ENCODE measurements at regions of chr6 and their contacts with region 1.

Region 1: DNA sequence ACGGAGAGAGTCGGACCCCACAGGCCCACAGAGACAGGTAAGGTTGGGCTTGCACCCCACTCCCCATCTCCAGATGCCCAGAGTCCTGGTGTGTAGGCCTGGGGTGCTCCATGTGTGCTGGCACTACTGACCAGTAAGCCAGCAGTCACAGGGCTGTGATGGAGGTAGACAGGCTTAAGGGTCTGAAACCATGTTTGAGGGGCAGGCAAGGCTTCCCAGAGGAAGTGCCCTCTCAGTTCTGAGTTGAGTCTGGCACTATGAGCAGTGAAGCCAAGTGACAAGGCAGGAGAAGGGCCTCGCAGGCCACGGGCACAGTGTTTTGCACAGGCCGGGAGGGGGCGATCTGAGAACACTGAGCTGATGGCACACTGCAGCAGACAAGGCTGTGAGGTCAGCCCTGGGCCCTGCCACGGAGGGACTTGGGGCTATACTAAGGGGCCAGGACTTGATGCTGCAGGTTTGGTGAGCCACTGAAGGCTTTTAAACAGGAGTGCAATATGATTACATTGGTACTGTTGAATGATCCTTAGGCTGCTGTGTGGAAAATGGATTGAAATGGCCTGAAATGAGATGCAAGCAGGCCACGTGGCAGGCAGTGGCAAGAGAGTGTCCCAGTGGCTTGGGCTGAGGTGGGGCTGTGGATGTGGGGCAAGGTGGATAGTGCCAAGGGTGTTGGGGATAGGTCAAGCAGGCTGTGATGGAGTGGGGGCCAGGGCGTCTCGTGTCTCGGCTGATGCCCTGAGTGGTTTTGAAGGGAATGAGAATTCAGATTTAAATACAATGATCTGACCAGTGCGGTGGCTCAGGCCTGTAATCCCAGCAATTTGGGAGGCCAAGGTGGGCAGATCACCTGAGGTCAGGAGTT is 20.3 kb downstream of the TTBK1 start:
- DNase-seq: peak; percentile 86
- ATAC-seq: peak; percentile 87

Region 2: DNA sequence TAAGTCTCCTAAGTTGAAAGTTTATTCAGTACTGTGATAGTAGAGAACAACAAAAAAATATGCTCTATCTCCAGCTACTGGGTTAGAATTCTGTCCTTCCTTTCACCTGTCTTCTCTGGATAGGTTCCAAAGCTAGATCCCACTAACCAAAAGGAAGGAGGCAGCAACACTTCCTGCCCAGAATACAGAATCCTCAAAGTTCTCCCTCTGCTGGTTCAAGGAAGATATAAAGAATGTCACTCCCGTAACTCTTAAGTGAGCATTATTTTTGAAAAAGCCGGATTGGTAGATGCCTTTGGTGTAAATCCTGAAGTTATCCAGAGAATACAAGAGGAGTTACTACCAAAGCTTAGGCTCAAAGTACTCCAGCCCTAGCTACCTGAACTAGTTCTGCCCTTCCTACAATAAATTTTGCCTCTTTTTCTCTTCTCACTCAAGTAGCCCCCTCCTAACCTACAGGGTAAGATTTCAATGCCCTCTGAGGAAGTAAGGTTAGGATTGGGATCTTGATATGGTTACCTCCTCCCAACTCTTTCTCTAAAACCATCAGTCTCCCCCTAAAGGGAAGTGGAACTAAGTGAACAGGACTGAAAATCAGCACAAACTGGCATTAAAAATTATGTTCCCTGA is 71.0 kb after region 1 on chr6:
- intact Hi-C with region 1: loop called (anchors 1 kb)
- DNase-seq: no peak
- ATAC-seq: no peak

Region 3: GRCh38 chr6:43355862-43356590 is 92.5 kb after region 1 on chr6:
- intact Hi-C with region 1: loop called (anchors 1 kb)
- DNase-seq: no peak
- ATAC-seq: peak; percentile 76

Region 4: DNA sequence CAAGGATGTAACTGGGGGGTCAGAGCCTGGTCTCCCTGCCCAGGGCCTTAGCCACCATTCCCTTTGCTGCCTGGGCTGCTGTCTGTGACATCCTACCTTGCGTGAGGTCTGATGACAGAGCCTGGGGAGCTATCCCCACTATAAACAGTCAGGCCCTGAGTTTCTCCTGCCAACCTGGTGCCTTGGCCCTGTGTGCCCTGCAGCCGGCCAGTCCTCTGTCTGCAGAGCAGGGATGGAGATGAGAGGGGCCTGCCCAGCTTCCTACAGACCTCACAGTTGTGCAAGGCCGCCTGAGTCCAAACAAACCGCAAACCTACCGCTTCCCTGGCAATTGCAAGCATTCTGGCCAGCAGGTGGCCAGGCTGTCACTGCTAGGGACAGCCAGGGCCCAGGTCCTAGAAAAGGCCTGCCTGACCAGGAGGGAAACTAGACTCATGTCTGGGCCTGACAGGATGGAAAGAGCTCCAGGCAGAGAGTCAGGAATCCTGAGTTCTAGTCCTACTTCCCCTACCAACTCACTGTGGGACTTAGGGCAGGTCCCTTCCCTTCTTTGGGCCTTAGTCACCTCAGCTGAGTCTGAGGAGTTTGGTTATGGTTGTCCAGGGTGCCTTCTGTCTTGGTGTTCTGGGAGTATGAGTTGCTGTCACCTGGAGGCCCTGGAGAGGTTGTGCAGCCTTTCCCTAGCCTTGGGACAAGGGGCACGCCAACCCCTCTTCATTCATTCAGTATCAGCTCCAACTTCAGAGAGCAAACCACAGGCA is 592.6 kb after region 1 on chr6:
- intact Hi-C with region 1: no loop called
- DNase-seq: no peak
- ATAC-seq: peak; percentile 57

Measured in Right ventricle myocardium inferior (tissue), 1 donor.